PC-3 (cell line): ENCODE measurements at regions of chr20 and their contacts with region 1.

Region 1: GRCh38 chr20:63009045-63009961 is 2.5 kb upstream of the BHLHE23 start:
- DNase-seq: peak; percentile 85
- ATAC-seq: peak; percentile 89
- H3K4me3 ChIP-seq: peak overlapping the region; percentile 43; the same call in 1 of the 2 replicates
- H3K27ac ChIP-seq: no peak overlapping the region
- H3K4me1 ChIP-seq: peaks cover 3% of the 10 kb centered on the region; the same call in 1 of the 2 replicates
- H3K27me3 ChIP-seq: peaks cover 70% of the 10 kb centered on the region
- CTCF ChIP-seq: peak; percentile 93

Region 2: DNA sequence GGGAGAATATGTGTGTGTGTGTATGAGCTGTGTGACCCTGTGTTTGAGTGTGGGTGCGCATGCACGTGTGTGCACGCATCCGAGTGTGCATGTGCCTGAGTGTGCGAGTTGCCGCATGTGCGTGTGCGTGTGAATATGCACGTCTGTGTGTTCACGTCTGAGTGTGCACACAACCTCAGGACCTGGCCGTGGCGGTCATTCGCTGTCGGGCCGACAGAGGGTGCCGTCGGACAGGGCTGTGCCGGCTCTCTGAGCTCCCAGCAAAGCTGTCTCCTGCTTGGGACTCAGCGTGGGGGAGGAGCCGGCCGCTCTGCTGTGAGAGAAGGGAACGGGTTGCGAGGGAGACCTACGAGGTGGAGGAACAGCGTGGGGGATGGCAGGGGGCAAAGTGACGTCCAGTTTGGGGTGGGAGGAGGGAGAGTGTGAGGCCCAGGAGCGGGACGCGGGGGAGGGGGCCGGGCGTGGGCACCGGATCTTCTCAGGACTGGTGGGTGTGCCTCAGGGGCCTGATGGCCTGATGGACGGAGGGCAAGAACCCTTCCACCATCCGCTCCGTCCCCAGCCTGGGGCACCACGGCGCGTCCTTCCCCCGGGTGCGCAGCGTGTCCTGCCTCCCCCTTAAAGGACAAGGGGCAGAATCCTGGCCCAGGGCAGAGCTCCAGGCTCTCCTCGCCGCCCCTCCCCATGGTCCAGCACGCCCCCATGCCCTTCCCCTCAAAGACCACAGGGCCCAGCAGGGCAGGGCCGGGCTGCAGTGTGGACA is 36.9 kb before region 1 on chr20:
- CTCF ChIA-PET with region 1: interaction called, 34 read pairs
- POLR2A ChIA-PET with region 1: no interaction called
- intact Hi-C with region 1: loop called (anchors 1 kb)
- DNase-seq: peak; percentile 86
- ATAC-seq: peak; percentile 93
- H3K4me3 ChIP-seq: peak overlapping the region; percentile 60
- H3K27ac ChIP-seq: no peak overlapping the region
- H3K4me1 ChIP-seq: peaks cover 5% of the 10 kb centered on the region; the same call in 1 of the 2 replicates
- H3K27me3 ChIP-seq: peaks cover 36% of the 10 kb centered on the region
- CTCF ChIP-seq: peak; percentile 88

Region 3: DNA sequence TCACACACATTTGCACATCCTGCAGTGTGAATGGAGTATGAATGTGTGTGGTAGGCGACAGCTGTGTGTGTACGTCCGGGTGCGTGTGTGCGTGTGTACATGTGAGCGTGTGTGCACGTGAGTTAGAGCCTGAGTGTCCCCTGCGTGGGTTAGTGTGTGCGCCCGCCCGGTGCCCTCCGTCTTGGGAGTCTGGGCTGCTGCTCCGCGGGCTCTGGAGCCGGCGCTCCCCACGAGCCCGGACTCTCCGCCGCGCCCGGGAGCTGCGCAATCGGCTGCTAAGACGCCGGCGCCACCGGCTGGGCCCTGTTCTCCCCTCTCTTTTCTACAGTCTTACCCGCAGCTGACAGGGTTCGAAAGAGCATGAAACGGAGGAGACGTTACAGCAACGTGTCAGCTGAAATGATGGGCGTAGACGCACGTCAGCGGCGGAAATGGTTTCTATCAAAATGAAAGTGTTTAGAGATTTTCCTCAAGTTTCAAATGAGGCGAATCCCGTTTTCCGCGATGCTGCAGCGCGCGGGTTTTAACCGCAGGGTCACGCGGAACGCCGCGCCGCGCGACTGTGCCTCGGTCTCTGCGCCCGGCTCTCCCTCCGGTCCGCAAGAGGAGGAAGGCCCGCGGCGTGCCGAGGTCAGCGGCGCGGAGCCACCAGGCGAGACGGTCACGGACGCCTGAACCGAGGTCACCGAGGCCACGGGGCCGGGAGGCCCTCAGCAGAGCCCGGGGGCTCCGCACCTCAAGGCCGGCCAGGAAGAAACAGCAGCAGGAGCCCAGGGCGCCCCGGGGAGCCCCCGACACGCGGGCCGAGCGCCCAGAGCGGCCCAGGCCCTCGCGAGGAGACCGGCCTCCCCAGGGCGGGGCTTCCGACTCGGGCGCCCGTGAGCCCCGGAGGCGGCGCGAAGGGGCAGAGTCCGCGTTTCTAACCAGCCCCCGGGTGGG is 92.7 kb after region 1 on chr20:
- CTCF ChIA-PET with region 1: no interaction called
- POLR2A ChIA-PET with region 1: no interaction called
- intact Hi-C with region 1: no loop called
- DNase-seq: peak; percentile 26
- ATAC-seq: peak; percentile 62
- H3K4me3 ChIP-seq: peak overlapping the region; percentile 81
- H3K27ac ChIP-seq: no peak overlapping the region
- H3K4me1 ChIP-seq: peaks cover 8% of the 10 kb centered on the region; the same call in 1 of the 2 replicates
- H3K27me3 ChIP-seq: peaks cover 12% of the 10 kb centered on the region
- CTCF ChIP-seq: no peak

Region 4: DNA sequence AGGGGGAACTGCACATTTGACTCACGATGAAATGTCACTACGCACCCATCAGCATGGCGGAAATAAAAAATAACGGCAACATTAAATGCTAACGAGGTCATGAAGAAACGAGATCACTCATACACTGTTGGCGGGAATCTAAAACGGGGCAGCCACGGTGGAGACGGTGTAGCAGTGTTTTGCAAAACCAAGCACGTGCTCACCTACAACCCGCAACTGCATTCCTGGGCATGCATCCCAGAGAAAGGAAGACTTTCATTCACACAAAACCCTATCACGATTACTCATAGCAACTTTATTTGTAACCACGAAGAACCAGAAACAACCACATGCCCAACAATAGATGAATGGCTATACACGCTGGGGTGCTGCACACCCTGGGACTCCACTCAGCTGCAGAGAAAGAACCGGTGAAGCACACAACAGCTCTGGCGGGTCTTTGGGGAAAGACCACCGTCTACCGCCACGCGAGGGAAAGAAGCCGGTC is 129.6 kb after region 1 on chr20:
- CTCF ChIA-PET with region 1: no interaction called
- POLR2A ChIA-PET with region 1: no interaction called
- intact Hi-C with region 1: no loop called
- DNase-seq: peak; percentile 84
- ATAC-seq: peak; percentile 84
- H3K4me3 ChIP-seq: no peak overlapping the region
- H3K27ac ChIP-seq: no peak overlapping the region
- H3K4me1 ChIP-seq: peaks cover 14% of the 10 kb centered on the region
- H3K27me3 ChIP-seq: peaks cover 53% of the 10 kb centered on the region
- CTCF ChIP-seq: no peak

Region 5: GRCh38 chr20:63911176-63911575 is 901.9 kb after region 1 on chr20:
- CTCF ChIA-PET with region 1: no interaction called
- POLR2A ChIA-PET with region 1: no interaction called
- intact Hi-C with region 1: no loop called
- DNase-seq: peak; percentile 92
- ATAC-seq: peak; percentile 96
- H3K4me3 ChIP-seq: peak overlapping the region; percentile 41
- H3K27ac ChIP-seq: peak overlapping the region; percentile 74
- H3K4me1 ChIP-seq: peaks cover 28% of the 10 kb centered on the region
- H3K27me3 ChIP-seq: no peaks in the 10 kb centered on the region
- CTCF ChIP-seq: no peak